Ascending aorta (tissue), 2 donors: ENCODE measurements at regions of chr21 and their contacts with region 1.

Region 1: GRCh38 chr21:29073222-29074006 is at the start of gene CCT8:
- DNase-seq: peak; percentile 95 to 99
- H3K4me3 ChIP-seq: peak within 1 kb of the TSS; percentile 71 to 73
- H3K27ac ChIP-seq: peak within 1 kb of the TSS; percentile 83 to 86
- H3K4me1 ChIP-seq: peaks cover 0 to 6% of the 10 kb centered on the region in 2 donors
- H3K27me3 ChIP-seq: no peaks in the 10 kb centered on the region
- CTCF ChIP-seq: no peak
- total RNA-seq, gene CCT8: 36.7 TPM

Region 2: DNA sequence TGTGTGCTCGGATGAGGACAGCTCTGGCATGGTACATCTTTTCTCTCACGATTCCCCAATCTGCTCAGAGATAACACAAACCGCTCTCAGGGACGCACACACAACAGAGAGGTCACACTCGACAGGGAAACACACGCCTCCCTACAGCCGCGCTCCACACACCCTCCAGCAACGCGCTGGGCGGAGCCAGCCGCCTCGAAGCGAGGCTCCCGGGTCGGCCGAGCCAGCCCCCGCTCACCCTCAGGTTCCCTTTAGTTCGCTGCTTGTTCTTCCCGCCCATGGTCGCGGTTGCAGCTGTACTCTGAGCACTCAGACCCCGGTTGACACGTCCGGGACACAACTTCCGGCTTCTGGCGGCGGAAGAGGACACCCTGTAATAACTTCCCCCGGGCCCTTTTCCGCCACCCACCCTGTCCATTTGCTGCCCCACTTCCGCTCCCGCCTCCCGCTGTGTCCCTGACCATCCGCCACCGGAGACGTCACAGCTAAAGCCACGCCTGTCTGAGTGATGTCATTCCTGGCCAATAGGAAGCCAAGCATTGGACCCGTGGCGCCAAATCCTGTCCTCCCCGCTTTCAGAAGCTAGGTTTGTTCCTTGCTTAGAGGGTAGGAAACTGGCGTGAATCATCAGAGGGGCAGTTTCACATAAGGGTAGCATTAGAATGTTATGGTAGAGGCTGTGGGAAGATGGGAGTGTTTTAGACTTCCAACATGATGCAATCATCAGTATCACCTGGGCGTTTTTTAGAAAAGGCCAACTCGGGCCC is 80.7 kb before region 1 on chr21 and contains the start of gene LTN1:
- intact Hi-C with region 1: loop called (anchors 2 kb)
- DNase-seq: peak; percentile 97 to 99
- H3K4me3 ChIP-seq: peak within 1 kb of the TSS; percentile 74 to 98
- H3K27ac ChIP-seq: peak within 1 kb of the TSS; percentile 86 to 90
- H3K4me1 ChIP-seq: peaks cover 5 to 11% of the 10 kb centered on the region in 2 donors
- H3K27me3 ChIP-seq: no peaks in the 10 kb centered on the region
- CTCF ChIP-seq: no peak
- total RNA-seq, gene LTN1: 5.6 TPM